OCI-LY7 (cell line): ENCODE measurements at regions of chr3 and their contacts with region 1.

Region 1: GRCh38 chr3:33883538-33883950 is 85.1 kb downstream of the PDCD6IP start:
- DNase-seq: peak; percentile 61
- H3K4me3 ChIP-seq: no peak overlapping the region
- H3K27ac ChIP-seq: no peak overlapping the region
- H3K4me1 ChIP-seq: no peaks in the 10 kb centered on the region
- CTCF ChIP-seq: peak; percentile 98

Region 2: DNA sequence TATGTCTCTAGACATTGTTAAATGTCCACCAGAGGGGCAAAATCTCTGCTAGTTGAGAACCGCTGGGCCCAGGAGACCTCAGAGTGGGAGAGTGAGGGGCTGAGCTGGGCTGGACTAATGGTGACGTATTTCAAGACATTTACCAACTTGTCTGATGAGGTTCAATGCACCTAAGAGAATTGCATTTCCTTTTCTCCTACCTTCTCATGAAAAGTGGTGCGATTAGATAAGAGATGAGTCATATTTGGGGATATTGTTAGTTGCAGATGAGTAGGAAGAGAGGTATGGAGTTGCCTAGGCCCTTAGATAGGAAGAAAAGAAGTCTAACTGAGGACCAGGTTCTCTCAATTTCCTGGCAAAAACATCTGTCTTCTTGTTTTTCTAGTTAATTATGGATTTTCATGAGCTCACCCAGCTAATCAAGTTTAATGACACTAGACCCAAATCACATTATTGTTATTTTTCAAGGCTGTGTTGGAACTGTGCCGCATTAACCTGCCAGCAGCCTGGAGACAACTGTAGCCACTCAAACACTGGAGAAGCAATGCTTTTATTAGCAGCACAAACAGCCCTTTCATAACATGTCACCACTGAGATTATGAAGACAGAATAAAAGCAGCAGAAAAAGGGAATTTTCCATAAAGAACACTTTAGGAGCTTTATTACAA is 59.1 kb after region 1 on chr3:
- CTCF ChIA-PET with region 1: no interaction called
- POLR2A ChIA-PET with region 1: no interaction called
- intact Hi-C with region 1: no loop called
- DNase-seq: no peak
- H3K4me3 ChIP-seq: no peak overlapping the region
- H3K27ac ChIP-seq: no peak overlapping the region
- H3K4me1 ChIP-seq: no peaks in the 10 kb centered on the region
- CTCF ChIP-seq: no peak

Region 3: GRCh38 chr3:34012102-34012461 is 128.5 kb after region 1 on chr3:
- CTCF ChIA-PET with region 1: no interaction called
- POLR2A ChIA-PET with region 1: no interaction called
- intact Hi-C with region 1: loop called (anchors 10 kb)
- DNase-seq: no peak
- H3K4me3 ChIP-seq: no peak overlapping the region
- H3K27ac ChIP-seq: no peak overlapping the region
- H3K4me1 ChIP-seq: peaks cover 49% of the 10 kb centered on the region
- CTCF ChIP-seq: no peak

Region 4: DNA sequence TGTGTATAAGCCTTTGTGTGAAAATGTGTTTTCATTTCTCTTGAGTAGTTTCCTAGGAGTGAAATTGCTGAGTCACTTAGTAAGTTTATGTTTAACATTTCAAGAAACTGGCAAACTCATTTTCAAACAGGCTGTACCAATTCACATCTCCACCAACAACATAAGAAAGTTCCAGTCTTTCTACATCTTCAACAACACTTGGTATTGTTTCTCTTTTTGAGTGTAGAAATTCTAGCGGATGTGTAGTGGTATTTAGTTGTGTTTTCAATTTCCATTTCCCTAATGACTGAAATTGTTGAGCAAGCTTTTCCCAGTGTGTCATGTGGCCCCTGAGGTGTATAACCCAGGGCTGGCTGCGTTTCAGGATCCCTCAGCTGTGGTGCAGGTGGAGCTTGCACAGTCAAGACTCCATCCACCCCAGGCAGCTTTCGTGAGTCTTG is 173.4 kb after region 1 on chr3:
- CTCF ChIA-PET with region 1: no interaction called
- POLR2A ChIA-PET with region 1: no interaction called
- intact Hi-C with region 1: no loop called
- DNase-seq: peak; percentile 12
- H3K4me3 ChIP-seq: no peak overlapping the region
- H3K27ac ChIP-seq: peak overlapping the region; percentile 19
- H3K4me1 ChIP-seq: peaks cover 18% of the 10 kb centered on the region
- CTCF ChIP-seq: no peak

Region 5: DNA sequence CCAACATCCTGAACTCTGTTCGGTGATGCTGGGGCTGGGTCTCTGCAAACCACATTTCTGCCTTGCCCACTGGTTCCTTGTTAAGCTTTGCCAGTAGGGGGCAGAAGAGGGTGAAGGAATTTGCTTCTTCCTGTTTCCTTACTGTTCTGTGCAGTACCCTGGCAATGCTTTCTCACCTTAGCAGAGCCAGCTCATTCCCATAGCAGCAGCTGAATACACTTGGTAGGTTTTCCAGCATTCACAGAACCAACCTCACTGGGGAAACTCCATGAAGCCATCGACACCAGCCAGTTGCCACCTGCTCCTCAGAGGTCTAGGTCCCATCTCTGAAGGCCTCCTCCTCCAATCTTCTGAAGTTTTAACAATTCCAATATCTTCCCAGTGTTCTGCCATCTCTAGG is 223.3 kb after region 1 on chr3:
- CTCF ChIA-PET with region 1: no interaction called
- POLR2A ChIA-PET with region 1: no interaction called
- intact Hi-C with region 1: loop called (anchors 2 kb)
- DNase-seq: peak; percentile 61
- H3K4me3 ChIP-seq: no peak overlapping the region
- H3K27ac ChIP-seq: peak overlapping the region; percentile 43
- H3K4me1 ChIP-seq: peaks cover 56% of the 10 kb centered on the region
- CTCF ChIP-seq: peak; percentile 88

Region 6: GRCh38 chr3:34277110-34277509 is 393.6 kb after region 1 on chr3:
- CTCF ChIA-PET with region 1: no interaction called
- POLR2A ChIA-PET with region 1: no interaction called
- intact Hi-C with region 1: loop called (anchors 10 kb)
- DNase-seq: peak; percentile 28
- H3K4me3 ChIP-seq: no peak overlapping the region
- H3K27ac ChIP-seq: no peak overlapping the region
- H3K4me1 ChIP-seq: no peaks in the 10 kb centered on the region
- CTCF ChIP-seq: peak; percentile 69

Region 7: DNA sequence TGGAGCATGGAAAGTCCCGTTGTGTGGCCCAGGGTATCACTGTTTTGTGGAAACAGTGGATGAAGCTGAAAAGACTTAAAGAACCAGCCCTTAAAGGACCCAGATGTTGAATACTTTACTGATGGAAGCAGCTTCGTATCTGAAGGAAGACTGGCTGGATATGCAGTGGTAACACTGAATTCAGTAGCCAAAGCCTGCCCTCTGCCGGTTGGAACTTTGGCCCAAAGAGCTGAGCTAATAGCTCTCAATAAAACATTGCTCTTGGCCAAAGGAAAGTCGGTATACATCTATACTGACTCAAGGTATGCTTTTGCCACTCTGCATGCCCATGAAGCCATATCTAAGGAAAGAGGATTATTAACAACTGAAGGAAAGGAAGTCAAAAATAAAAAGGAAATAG is 800.3 kb after region 1 on chr3:
- CTCF ChIA-PET with region 1: interaction called, 5 read pairs
- POLR2A ChIA-PET with region 1: no interaction called
- intact Hi-C with region 1: loop called (anchors 1 kb)
- DNase-seq: peak; percentile 59
- H3K4me3 ChIP-seq: no peak overlapping the region
- H3K27ac ChIP-seq: no peak overlapping the region
- H3K4me1 ChIP-seq: no peaks in the 10 kb centered on the region
- CTCF ChIP-seq: peak; percentile 81